Activated B cell treated with CpG ODN at 0.5 μM for 24 hours (primary cell): ENCODE measurements at regions of chr17 and their contacts with region 1.

Region 1: DNA sequence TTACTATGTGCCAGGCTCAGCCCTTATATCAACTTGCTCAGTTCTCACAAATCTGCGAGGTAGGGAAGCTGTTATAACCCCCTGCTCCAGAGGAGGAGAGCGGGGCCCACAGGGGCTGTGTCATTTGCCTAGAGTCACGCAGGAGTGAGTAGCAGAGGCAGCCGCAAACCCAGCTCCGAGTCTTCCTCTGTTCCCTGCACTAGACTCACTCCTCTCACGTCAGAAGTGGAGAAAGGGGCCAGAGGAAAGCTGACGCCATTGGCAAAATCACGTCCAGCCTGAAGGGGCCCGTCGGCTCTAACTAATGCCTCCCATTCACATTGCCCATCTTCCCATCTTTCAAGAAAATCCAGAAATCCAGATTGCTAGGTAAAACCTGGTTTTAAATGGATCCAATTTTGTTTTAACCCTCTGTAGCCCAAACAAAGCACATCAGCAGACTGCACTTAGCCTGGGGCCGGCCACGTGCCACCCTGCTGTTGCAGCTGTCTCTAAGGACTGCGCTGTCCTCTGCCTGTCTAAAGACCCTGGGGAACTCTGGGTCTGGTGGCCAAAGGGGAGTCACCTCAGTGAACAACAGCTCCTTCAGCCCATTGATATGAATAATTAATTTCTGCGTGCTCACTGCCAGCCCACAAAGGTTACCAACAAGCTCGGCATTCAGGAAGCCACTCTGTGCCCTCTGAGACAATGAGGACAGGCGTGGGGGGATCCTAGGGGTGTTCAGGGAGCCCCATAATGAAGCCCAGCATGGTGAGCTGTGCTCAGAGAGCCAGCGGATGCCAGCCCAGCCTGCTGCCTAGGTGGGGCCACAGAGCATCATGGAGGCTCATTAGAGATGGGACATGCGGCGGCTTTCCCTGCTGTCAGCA is 36.7 kb upstream of the ABR start:
- DNase-seq: no peak
- ATAC-seq: peak; percentile 88
- H3K4me3 Mint-ChIP-seq: peak overlapping the region; percentile 75
- H3K27ac Mint-ChIP-seq: peak overlapping the region; percentile 75
- H3K4me1 Mint-ChIP-seq: peaks cover 79% of the 10 kb centered on the region
- H3K27me3 Mint-ChIP-seq: no peaks in the 10 kb centered on the region
- CTCF ChIP-seq: no peak

Region 2: DNA sequence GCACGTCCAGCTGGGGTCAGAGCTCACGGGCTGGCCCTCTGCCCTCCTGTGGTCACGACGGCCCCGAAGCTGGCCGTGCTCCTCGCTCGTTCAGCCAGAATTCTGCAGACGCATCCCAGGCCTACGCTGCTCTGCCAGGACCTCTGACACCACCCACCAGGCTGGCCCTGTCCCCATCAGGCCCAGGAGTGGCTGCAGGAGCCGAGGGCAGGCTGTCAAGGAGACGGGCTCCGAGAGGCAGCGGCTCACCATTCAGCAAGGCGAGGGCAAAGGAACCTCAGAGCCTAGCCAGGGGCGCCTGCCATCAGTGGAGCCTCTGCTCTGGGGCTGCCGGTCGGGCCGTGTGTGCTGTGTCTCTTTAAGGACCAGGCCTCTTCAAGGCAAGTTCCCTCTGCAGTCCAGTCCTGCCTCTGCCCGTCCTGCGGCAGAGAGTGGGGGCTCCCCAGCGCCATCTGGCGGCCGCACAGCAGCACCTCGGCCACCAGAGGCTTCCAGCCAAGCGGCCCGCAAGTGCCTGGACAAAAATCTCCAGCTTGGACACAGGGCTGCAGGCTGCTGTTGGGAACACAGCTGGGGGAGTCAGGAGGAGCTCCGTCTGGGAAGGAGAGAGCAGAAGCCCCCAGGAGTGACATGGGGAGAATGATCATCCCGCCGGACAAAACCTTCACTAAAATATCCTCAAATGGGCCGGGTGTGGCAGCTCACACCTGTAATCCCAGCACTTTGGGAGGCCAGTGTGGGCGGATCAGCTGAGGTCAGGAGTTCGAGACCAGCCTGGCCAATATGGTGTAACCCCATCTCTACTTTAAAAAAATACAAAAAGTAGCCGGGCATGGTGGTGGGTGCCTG is 29.3 kb before region 1 on chr17:
- CTCF ChIA-PET with region 1: interaction called, 10 read pairs
- POLR2A ChIA-PET with region 1: interaction called, 4 read pairs
- intact Hi-C with region 1: no loop called
- DNase-seq: peak; percentile 73
- ATAC-seq: peak; percentile 79
- H3K4me3 Mint-ChIP-seq: peak overlapping the region; percentile 26
- H3K27ac Mint-ChIP-seq: no peak overlapping the region
- H3K4me1 Mint-ChIP-seq: peaks cover 60% of the 10 kb centered on the region
- H3K27me3 Mint-ChIP-seq: no peaks in the 10 kb centered on the region
- CTCF ChIP-seq: no peak

Region 3: DNA sequence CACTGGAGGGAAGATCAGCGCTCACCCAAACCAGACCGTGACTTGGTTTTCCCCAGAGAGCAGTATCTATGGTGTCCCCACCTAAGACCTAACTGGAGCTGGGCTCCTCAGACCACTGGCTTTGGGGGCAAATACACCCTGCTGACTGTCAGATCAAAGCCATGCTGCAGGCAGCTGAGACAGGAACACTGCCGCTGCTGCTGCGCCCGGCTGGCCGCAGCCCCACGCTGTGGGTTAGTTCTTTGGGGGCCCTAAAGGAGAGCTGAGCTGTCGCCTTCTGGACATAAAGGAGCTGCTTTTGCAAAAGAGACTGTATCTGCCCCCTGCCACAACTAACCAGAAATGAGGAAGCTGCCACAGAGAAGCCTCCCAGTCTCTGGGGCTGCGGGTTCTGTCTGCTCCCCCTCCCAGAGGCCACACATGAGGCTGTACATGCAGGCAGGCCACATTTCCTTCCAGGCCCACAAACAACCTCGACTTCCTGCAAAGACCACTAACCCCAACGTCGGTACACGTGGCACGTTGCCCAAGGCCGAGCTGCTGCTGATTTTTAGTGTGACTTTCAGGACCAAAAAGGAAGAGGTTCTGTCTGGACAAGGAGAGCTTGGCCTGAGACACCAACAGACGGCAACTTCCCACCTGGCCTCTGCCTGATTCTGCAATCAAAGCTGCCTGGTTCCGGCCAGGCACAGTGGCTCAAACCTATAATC is 18.5 kb before region 1 on chr17:
- CTCF ChIA-PET with region 1: interaction called, 6 read pairs
- POLR2A ChIA-PET with region 1: interaction called, 15 read pairs
- intact Hi-C with region 1: no loop called
- DNase-seq: peak; percentile 58
- ATAC-seq: peak; percentile 87
- H3K4me3 Mint-ChIP-seq: peak overlapping the region; percentile 63
- H3K27ac Mint-ChIP-seq: peak overlapping the region; percentile 80
- H3K4me1 Mint-ChIP-seq: peaks cover 69% of the 10 kb centered on the region
- H3K27me3 Mint-ChIP-seq: no peaks in the 10 kb centered on the region
- CTCF ChIP-seq: no peak

Region 4: GRCh38 chr17:1267471-1267947 is 51.1 kb after region 1 on chr17:
- CTCF ChIA-PET with region 1: no interaction called
- POLR2A ChIA-PET with region 1: no interaction called
- intact Hi-C with region 1: loop called (anchors 1 kb)
- DNase-seq: no peak
- ATAC-seq: no peak
- H3K4me3 Mint-ChIP-seq: peak overlapping the region; percentile 86
- H3K27ac Mint-ChIP-seq: peak overlapping the region; percentile 83
- H3K4me1 Mint-ChIP-seq: peaks cover 12% of the 10 kb centered on the region
- H3K27me3 Mint-ChIP-seq: no peaks in the 10 kb centered on the region
- CTCF ChIP-seq: no peak

Region 5: GRCh38 chr17:1286379-1287106 is 70.1 kb after region 1 on chr17:
- CTCF ChIA-PET with region 1: no interaction called
- POLR2A ChIA-PET with region 1: no interaction called
- intact Hi-C with region 1: no loop called
- DNase-seq: no peak
- ATAC-seq: no peak
- H3K4me3 Mint-ChIP-seq: no peak overlapping the region
- H3K27ac Mint-ChIP-seq: no peak overlapping the region
- H3K4me1 Mint-ChIP-seq: no peaks in the 10 kb centered on the region
- H3K27me3 Mint-ChIP-seq: no peaks in the 10 kb centered on the region
- CTCF ChIP-seq: no peak